Activated CD8-positive, alpha-beta memory T cell treated with anti-CD3 and anti-CD28 coated beads, Interleukin-2, amount 10 ng/mL, durations not matched to agents 7 days and 5 days (primary cell): ENCODE measurements at regions of chr5 and their contacts with region 1.

Region 1: DNA sequence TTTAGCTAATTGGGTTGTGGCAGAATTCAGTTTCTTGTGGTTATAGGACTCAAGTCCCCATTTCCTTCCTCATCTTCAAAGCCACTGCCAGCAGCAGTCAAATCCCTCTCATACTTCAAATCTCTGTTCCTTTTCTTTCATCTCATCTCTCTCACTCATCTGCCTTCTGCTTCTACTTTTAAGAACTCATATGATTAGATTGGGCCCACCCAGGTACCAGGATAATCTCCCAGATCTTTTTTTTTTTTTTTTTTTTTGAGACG is 8.0 kb upstream of the REEP5 start:
- DNase-seq: peak; percentile 46
- ATAC-seq: peak; percentile 54
- H3K4me3 Mint-ChIP-seq: peak overlapping the region; percentile 60
- H3K27ac Mint-ChIP-seq: peak overlapping the region; percentile 96
- H3K4me1 Mint-ChIP-seq: peaks cover 58% of the 10 kb centered on the region
- H3K27me3 Mint-ChIP-seq: no peaks in the 10 kb centered on the region

Region 2: GRCh38 chr5:112878760-112879159 is 51.3 kb before region 1 on chr5:
- CTCF ChIA-PET with region 1: no interaction called
- DNase-seq: peak; percentile 89
- ATAC-seq: peak; percentile 89
- H3K4me3 Mint-ChIP-seq: peak overlapping the region; percentile 7
- H3K27ac Mint-ChIP-seq: peak overlapping the region; percentile 67
- H3K4me1 Mint-ChIP-seq: peaks cover 47% of the 10 kb centered on the region
- H3K27me3 Mint-ChIP-seq: no peaks in the 10 kb centered on the region

Region 3: GRCh38 chr5:112968411-112969106 is 38.5 kb after region 1 on chr5:
- CTCF ChIA-PET with region 1: interaction called, 10 read pairs
- DNase-seq: no peak
- ATAC-seq: no peak
- H3K4me3 Mint-ChIP-seq: no peak overlapping the region
- H3K27ac Mint-ChIP-seq: peak overlapping the region; percentile 18
- H3K4me1 Mint-ChIP-seq: peaks cover 35% of the 10 kb centered on the region
- H3K27me3 Mint-ChIP-seq: no peaks in the 10 kb centered on the region

Region 4: GRCh38 chr5:113022661-113023060 is 92.6 kb after region 1 on chr5:
- CTCF ChIA-PET with region 1: no interaction called
- DNase-seq: no peak
- ATAC-seq: peak; percentile 85
- H3K4me3 Mint-ChIP-seq: no peak overlapping the region
- H3K27ac Mint-ChIP-seq: peak overlapping the region; percentile 76
- H3K4me1 Mint-ChIP-seq: peaks cover 56% of the 10 kb centered on the region
- H3K27me3 Mint-ChIP-seq: no peaks in the 10 kb centered on the region